ENCODE measurements at regions of chr12 and their contacts with region 1.

Region 1: GRCh38 chr12:12366701-12367481 is 10.0 kb downstream of the BORCS5 start:
- DNase-seq: no peak
- ATAC-seq: no peak
- H3K4me3 ChIP-seq: no peak overlapping the region
- H3K27ac ChIP-seq: no peak overlapping the region
- H3K4me1 ChIP-seq: no peaks in the 10 kb centered on the region
- H3K27me3 ChIP-seq: no peaks in the 10 kb centered on the region
- CTCF ChIP-seq: no peak

Region 2: DNA sequence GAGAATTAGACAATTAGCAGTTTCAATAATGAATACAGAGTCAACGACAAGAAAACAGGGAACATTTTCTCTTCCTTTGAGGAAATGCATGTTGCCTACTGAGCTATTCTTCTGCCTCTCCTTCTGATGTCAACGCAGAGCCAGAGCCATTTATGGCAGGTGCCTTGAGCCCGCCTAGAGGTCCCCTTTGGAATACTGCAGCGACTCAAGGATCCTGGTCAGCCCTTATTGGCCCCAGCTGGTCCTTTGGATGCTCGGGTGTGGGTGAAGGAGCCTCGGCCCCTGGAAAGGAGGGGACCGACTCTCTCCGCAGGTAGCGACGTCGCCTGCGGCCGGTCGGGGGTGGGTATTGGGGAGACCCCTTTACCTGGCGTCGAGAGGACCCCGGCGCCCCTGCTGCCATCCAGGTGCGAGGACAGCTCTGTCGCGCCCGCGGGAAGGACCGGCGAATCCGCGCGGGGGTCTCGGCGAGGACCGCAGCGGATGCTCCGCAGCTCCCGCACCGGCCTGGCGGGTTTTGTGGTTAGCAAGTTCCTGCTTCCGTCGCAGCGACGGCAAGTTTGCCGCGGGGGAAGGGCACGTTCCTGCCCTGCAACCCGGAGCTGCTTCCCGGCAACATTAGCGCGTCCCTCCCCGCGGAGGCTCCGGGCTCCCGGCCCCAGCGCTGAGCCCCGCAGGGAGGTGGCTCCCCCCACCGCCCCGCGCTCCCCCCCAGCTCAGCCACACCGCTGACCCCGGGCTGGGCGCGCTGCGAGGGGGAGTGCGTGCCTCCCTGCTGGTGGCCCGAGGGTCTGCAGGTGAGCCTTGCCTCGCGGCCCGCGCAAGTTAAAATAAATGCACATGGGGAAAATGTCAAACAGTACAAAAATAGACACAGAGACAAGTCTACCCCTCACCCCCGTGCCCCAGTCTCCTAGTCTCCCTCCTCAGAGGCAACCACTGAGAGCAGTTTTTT is 16.9 kb before region 1 on chr12 and contains the start of gene MANSC1:
- CTCF ChIA-PET with region 1: no interaction called
- POLR2A ChIA-PET with region 1: interaction called, 10 read pairs
- in situ Hi-C with region 1: no loop called
- intact Hi-C with region 1: no loop called
- DNase-seq: no peak
- ATAC-seq: peak; percentile 95
- H3K4me3 ChIP-seq: peak within 1 kb of the TSS; percentile 56 to 63
- H3K27ac ChIP-seq: no peak within 1 kb of the TSS
- H3K4me1 ChIP-seq: 0 out of 2 replicates have a peak, but pooled peaks cover 4% of the 10 kb centered on the region
- H3K27me3 ChIP-seq: no peaks in the 10 kb centered on the region
- CTCF ChIP-seq: peak; percentile 39
- total RNA-seq, gene MANSC1: 10.0 TPM